ENCODE measurements at regions of chr3 and their contacts with region 1.

Region 1: GRCh38 chr3:58082047-58082446 is 73.8 kb downstream of the FLNB start:
- DNase-seq: peak; percentile 99
- H3K4me3 ChIP-seq: no peak overlapping the region
- H3K27ac ChIP-seq: peak overlapping the region; percentile 93
- H3K4me1 ChIP-seq: peaks cover 62% of the 10 kb centered on the region
- H3K27me3 ChIP-seq: no peaks in the 10 kb centered on the region
- CTCF ChIP-seq: no peak
- POLR2A ChIP-seq: peak; percentile 47

Region 2: GRCh38 chr3:57411715-57412114 is 670.3 kb before region 1 on chr3:
- CTCF ChIA-PET with region 1: no interaction called
- POLR2A ChIA-PET with region 1: no interaction called
- dilution Hi-C with region 1: no loop called
- intact Hi-C with region 1: no loop called
- DNase-seq: no peak
- H3K4me3 ChIP-seq: no peak overlapping the region
- H3K27ac ChIP-seq: no peak overlapping the region
- H3K4me1 ChIP-seq: no peaks in the 10 kb centered on the region
- H3K27me3 ChIP-seq: no peaks in the 10 kb centered on the region
- CTCF ChIP-seq: no peak
- POLR2A ChIP-seq: no peak

Region 3: DNA sequence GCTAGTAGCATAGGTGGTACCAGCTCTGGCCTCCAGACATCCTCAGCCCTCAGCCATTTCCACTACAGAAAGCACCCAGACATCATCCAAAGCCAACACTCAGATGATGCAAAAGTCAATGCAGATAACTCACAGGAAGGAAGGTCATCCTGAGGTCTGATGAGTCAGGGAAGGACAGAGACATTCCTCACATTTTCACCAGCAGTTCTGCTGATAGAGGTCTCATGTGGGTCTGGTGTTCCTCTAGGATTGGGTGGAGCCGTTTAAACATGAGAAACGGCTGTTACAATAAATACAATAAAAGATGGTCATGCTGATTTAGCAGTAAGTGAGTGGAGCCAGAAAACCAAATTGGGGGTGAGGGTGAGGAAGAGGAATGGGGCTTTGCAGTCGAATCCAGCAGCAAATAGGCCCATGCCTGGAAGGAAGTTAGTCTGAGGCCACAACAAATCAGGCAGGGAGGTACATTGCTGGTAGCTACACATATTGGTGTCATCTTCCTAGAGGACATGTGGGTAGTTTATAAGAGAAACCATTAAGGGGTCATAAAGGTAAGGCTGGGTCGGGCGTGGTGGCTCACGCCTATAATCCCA is 107.2 kb before region 1 on chr3:
- CTCF ChIA-PET with region 1: no interaction called
- POLR2A ChIA-PET with region 1: no interaction called
- dilution Hi-C with region 1: no loop called
- intact Hi-C with region 1: loop called (anchors 2 kb)
- DNase-seq: peak; percentile 86
- H3K4me3 ChIP-seq: no peak overlapping the region
- H3K27ac ChIP-seq: peak overlapping the region; percentile 94
- H3K4me1 ChIP-seq: peaks cover 47% of the 10 kb centered on the region
- H3K27me3 ChIP-seq: no peaks in the 10 kb centered on the region
- CTCF ChIP-seq: no peak
- POLR2A ChIP-seq: no peak

Region 4: DNA sequence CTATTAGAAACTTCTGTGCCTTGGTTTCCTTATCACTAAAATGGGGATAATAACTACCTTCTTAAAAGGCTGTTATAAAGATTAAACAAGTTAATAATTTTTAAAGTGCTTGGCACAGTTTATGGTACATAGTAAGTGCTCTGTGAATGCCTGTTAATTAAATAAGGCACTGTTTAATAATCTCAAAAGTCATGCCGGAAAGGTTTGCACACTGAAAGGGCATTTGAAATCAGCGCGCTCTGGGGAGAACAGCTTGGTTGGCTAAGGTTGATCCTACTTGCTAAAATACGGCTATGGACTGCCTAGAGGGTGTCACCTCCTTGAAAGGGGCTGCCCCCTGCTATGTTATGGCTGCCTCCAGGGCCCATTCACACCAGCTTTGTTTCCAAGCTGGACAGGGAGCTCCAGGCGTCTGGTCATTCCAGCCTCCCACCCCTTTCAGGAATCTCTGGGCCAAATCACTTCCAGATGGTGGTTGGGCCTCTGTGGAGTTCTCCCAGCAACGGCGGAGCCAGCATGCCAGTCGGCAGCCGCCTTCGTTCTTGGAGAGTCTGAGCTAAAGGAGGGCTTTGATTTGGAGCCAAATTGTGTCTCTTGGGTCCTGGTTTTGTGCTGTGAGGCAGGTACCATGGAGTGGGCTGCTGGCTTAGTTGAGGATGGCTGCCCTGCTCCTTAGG is 67.9 kb before region 1 on chr3:
- CTCF ChIA-PET with region 1: interaction called, 5 read pairs
- POLR2A ChIA-PET with region 1: interaction called, 8 read pairs
- dilution Hi-C with region 1: no loop called
- intact Hi-C with region 1: loop called (anchors 1 kb)
- DNase-seq: peak; percentile 58
- H3K4me3 ChIP-seq: peak overlapping the region in 2 of 3 experiments; percentile 2 to 19
- H3K27ac ChIP-seq: peak overlapping the region; percentile 1
- H3K4me1 ChIP-seq: peaks cover 65% of the 10 kb centered on the region
- H3K27me3 ChIP-seq: no peaks in the 10 kb centered on the region
- CTCF ChIP-seq: no peak
- POLR2A ChIP-seq: no peak

Region 5: GRCh38 chr3:58059349-58060321 is 22.4 kb before region 1 on chr3:
- CTCF ChIA-PET with region 1: interaction called, 10 read pairs
- POLR2A ChIA-PET with region 1: interaction called, 4 read pairs
- dilution Hi-C with region 1: no loop called
- intact Hi-C with region 1: loop called (anchors 1 kb)
- DNase-seq: peak; percentile 74
- H3K4me3 ChIP-seq: no peak overlapping the region
- H3K27ac ChIP-seq: peak overlapping the region; percentile 66
- H3K4me1 ChIP-seq: peaks cover 54% of the 10 kb centered on the region
- H3K27me3 ChIP-seq: no peaks in the 10 kb centered on the region
- CTCF ChIP-seq: no peak
- POLR2A ChIP-seq: no peak

Measured in endothelial cell of umbilical vein (primary cell).